ENCODE measurements at regions of chr9 and their contacts with region 1.

Region 1: GRCh38 chr9:111896353-111896958 is at the start of gene UGCG:
- DNase-seq: peak; percentile 87 to 91 (median 89)
- H3K4me3 ChIP-seq: peak within 1 kb of the TSS; percentile 88 to 96 (median 91)
- H3K27ac ChIP-seq: peak within 1 kb of the TSS; percentile 80 to 96 (median 94)
- H3K4me1 ChIP-seq: peaks cover 25 to 41% of the 10 kb centered on the region in 2 donors
- H3K27me3 ChIP-seq: no peaks in the 10 kb centered on the region
- CTCF ChIP-seq: peak in 1 of 6 experiments; percentile 1
- POLR2A ChIP-seq: peak; percentile 87 to 98
- total RNA-seq, gene UGCG: 41.4 to 139 (median 95.1) TPM

Region 2: DNA sequence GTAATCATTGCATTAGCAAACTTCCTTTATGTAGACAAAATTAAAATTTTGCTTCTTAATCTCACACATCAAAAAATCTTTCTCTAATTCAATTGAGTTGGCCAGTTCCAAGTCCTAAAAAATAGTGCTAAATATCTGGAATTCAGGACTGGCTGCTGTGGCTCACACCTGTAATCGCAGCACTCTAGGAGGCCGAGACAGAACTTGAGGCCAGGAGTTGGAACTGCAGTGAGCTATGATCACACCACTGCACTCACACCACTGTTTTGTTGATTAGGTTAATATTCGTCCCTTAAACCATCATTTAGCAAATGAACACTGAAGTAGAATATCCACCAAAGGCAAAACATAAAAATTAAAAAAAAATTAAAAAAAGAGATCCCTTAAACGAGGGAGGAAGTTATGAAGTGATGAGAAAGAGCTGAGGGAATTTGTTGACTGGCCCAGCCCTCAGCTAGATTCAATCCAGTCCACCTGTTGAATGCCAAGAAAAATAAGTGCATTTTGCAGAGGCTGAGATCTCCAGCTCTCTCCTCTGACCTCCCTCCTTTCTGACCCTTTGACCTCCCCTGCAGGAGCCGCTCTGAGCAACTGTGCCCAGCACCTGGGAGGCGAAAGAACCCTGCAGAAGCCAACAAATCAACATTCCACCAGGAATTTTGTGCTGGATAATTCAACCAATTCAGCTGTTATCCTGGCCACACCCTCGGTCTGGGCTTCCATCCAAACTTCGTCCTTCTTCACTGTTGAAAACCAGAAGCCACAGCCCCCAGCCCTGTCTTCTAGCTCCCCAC is 663.3 kb before region 1 on chr9:
- intact Hi-C with region 1: no loop called
- DNase-seq: no peak
- H3K4me3 ChIP-seq: no peak overlapping the region
- H3K27ac ChIP-seq: no peak overlapping the region
- H3K4me1 ChIP-seq: no peaks in the 10 kb centered on the region
- H3K27me3 ChIP-seq: no peaks in the 10 kb centered on the region
- CTCF ChIP-seq: no peak
- POLR2A ChIP-seq: no peak

Region 3: GRCh38 chr9:111759762-111760639 is 136.5 kb before region 1 on chr9:
- intact Hi-C with region 1: loop called in 1 of 2 experiments (anchors 10 kb)
- DNase-seq: peak; percentile 29 to 71 (median 64)
- H3K4me3 ChIP-seq: no peak overlapping the region
- H3K27ac ChIP-seq: peak overlapping the region in 1 of 5 donors; percentile 10
- H3K4me1 ChIP-seq: peaks cover 0 to 5% of the 10 kb centered on the region in 2 donors
- H3K27me3 ChIP-seq: no peaks in the 10 kb centered on the region
- CTCF ChIP-seq: peak; percentile 67 to 88 (median 78)
- POLR2A ChIP-seq: no peak

Region 4: GRCh38 chr9:111839388-111839787 is 57.1 kb before region 1 on chr9:
- intact Hi-C with region 1: loop called (anchors 10 kb)
- DNase-seq: peak; percentile 43 to 77 (median 66)
- H3K4me3 ChIP-seq: peak overlapping the region in 1 of 4 donors; percentile 3
- H3K27ac ChIP-seq: peak overlapping the region; percentile 22 to 88 (median 59)
- H3K4me1 ChIP-seq: peaks cover 41 to 43% of the 10 kb centered on the region in 2 donors
- H3K27me3 ChIP-seq: no peaks in the 10 kb centered on the region
- CTCF ChIP-seq: no peak
- POLR2A ChIP-seq: peak in 1 of 2 donors; percentile 40